ENCODE measurements at regions of chr16 and their contacts with region 1.

Region 1: DNA sequence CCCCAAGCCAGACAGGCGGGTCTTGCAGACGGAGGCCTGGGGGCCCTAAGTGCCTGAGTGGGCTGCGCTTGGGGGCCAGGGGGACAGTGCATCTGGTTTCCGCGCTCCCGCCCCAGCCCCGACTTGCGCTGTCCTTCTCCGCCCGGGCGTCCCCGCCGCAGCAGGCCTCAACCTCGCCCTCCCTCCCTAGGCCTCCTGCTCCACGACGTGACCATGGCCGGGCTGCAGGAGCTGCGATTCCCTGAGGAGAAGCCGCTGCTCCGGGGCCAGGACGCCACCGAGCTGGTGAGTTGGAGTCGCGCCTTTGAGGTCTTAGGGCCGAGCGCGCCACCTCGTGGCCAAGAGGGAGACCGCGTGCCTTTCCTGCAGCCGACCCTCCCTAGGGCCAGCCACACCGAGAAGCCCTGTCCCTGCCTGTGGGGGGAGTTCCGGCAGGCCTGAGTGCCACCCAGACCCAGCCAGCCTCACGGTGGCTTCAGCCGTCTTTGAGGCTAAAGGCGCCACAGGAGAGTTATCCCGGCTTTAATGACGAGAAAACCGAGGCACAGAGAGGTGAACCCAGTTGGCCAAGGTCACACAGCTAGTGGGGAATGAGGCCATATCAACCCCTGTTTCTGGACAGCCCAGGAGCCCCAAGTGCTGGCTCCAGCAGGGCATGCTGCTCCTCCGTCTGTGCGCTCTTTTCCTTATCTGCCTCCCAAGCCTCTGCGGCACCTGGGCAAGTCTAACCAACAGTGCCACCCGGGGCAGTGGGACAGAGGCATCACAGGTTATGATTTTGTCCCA is 12.2 kb upstream of the NDRG4 start:
- DNase-seq: peak; percentile 88
- H3K4me3 ChIP-seq: peak overlapping the region; percentile 29
- H3K27ac ChIP-seq: no peak overlapping the region
- H3K4me1 ChIP-seq: peaks cover 15% of the 10 kb centered on the region
- CTCF ChIP-seq: peak; percentile 90

Region 2: DNA sequence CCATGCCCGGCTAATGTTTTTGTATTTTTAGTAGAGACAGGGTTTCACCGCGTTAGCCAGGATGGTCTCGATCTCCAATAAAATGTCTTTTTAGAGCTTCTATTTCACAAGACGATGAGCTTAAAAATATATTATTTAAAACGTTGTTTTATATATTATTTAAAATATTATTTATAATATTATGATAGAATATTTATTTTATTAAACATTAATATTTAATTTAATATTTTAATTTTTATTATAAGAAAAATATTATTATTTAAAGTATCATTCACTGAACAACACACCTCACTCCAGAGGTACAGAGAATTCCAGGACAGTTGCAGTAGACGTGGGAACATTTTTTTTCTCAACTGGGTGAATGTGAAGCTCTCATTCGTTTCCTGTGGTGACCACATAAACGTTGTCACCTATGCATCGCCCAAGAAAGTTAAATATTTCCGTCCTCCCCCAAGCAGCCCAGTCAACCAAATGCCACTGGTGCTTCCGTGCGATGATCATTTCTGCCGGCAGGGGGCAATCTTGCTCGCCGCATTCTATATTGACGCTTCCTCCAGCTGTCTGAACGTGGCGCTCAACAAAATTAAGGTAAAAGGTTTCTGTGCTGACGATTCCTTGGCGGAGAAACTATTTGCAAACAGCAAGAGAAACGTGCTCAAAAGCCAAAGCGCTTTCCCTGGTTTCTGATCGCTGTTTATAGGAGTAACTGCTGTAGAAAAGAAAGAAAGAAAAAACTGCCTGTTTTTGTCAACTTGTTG is 151.2 kb before region 1 on chr16:
- CTCF ChIA-PET with region 1: interaction called, 6 read pairs
- POLR2A ChIA-PET with region 1: interaction called, 11 read pairs
- intact Hi-C with region 1: loop called (anchors 1 kb)
- DNase-seq: peak; percentile 86
- H3K4me3 ChIP-seq: no peak overlapping the region
- H3K27ac ChIP-seq: no peak overlapping the region
- H3K4me1 ChIP-seq: peaks cover 26% of the 10 kb centered on the region
- CTCF ChIP-seq: peak; percentile 99

Region 3: GRCh38 chr16:58345574-58346354 is 142.0 kb before region 1 on chr16:
- CTCF ChIA-PET with region 1: no interaction called
- POLR2A ChIA-PET with region 1: no interaction called
- intact Hi-C with region 1: loop called (anchors 1 kb)
- DNase-seq: peak; percentile 46
- H3K4me3 ChIP-seq: no peak overlapping the region
- H3K27ac ChIP-seq: no peak overlapping the region
- H3K4me1 ChIP-seq: peaks cover 42% of the 10 kb centered on the region
- CTCF ChIP-seq: peak; percentile 88

Measured in OCI-LY7 (cell line).